Activated CD4-positive, alpha-beta T cell treated with anti-CD3 and anti-CD28 coated beads, Interleukin-2, amount 10 ng/mL, durations not matched to agents 7 days and 5 days (primary cell): ENCODE measurements at regions of chr14 and their contacts with region 1.

Region 1: GRCh38 chr14:23539248-23540140 is 12.1 kb downstream of the ZFHX2 start:
- DNase-seq: peak; percentile 51
- H3K4me3 Mint-ChIP-seq: no peak overlapping the region
- H3K27ac Mint-ChIP-seq: no peak overlapping the region
- H3K4me1 Mint-ChIP-seq: peaks cover 3% of the 10 kb centered on the region
- H3K27me3 Mint-ChIP-seq: peaks cover 2% of the 10 kb centered on the region

Region 2: GRCh38 chr14:23528555-23528954 is 10.9 kb before region 1 on chr14:
- CTCF ChIA-PET with region 1: interaction called, 14 read pairs
- POLR2A ChIA-PET with region 1: no interaction called
- DNase-seq: no peak
- H3K4me3 Mint-ChIP-seq: no peak overlapping the region
- H3K27ac Mint-ChIP-seq: no peak overlapping the region
- H3K4me1 Mint-ChIP-seq: peaks cover 9% of the 10 kb centered on the region
- H3K27me3 Mint-ChIP-seq: no peaks in the 10 kb centered on the region

Region 3: DNA sequence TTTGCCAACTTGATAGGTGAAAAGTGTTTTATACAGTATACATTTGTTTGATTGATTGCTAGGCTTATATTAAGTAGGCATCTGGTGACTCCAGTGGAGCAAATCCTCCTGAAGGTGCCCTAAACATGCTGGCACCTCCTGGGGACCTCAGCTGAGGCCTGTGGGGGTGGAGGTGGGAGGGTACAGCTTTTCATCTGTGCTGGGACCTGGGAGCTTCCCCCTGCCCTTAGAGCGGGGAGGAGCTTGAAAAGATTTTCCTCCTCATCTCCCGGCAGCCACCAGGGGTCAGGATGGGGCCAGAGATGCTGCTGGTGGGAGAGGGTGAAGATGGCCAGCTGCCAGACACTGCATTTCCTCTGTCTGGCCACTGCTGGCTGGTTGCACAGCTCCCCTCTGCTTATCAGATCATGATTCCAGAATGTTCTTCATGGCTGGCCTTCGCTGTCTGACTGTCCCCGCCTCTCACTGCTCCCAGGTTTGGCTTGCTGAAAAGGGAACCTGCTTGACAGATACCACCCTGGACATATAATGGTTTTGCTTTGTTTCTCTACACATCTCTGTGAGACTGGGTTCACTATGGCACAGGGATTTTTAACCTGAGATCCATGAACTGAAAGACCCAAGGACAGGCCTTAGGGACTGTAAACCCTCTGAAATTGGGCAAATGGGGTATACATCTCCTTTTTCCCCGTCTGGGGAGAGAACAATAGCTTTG is 49.5 kb after region 1 on chr14:
- CTCF ChIA-PET with region 1: no interaction called
- POLR2A ChIA-PET with region 1: no interaction called
- DNase-seq: peak; percentile 80
- H3K4me3 Mint-ChIP-seq: no peak overlapping the region
- H3K27ac Mint-ChIP-seq: no peak overlapping the region
- H3K4me1 Mint-ChIP-seq: peaks cover 6% of the 10 kb centered on the region
- H3K27me3 Mint-ChIP-seq: peaks cover 17% of the 10 kb centered on the region